ENCODE measurements at regions of chr11 and their contacts with region 1.

Region 1: GRCh38 chr11:104897891-104898684 is at the start of gene CASP12:
- DNase-seq: no peak
- H3K4me3 ChIP-seq: peak within 1 kb of the TSS; percentile 44 to 65
- H3K27ac ChIP-seq: peak within 1 kb of the TSS; percentile 83 to 85
- H3K4me1 ChIP-seq: peaks cover 0 to 3% of the 10 kb centered on the region in 2 donors
- H3K27me3 ChIP-seq: no peaks in the 10 kb centered on the region
- CTCF ChIP-seq: no peak
- total RNA-seq, gene CASP12: 5.6 TPM

Region 2: GRCh38 chr11:104728927-104729326 is 169.2 kb before region 1 on chr11:
- intact Hi-C with region 1: no loop called
- DNase-seq: no peak
- H3K4me3 ChIP-seq: no peak overlapping the region
- H3K27ac ChIP-seq: no peak overlapping the region
- H3K4me1 ChIP-seq: no peaks in the 10 kb centered on the region
- H3K27me3 ChIP-seq: no peaks in the 10 kb centered on the region
- CTCF ChIP-seq: no peak

Region 3: DNA sequence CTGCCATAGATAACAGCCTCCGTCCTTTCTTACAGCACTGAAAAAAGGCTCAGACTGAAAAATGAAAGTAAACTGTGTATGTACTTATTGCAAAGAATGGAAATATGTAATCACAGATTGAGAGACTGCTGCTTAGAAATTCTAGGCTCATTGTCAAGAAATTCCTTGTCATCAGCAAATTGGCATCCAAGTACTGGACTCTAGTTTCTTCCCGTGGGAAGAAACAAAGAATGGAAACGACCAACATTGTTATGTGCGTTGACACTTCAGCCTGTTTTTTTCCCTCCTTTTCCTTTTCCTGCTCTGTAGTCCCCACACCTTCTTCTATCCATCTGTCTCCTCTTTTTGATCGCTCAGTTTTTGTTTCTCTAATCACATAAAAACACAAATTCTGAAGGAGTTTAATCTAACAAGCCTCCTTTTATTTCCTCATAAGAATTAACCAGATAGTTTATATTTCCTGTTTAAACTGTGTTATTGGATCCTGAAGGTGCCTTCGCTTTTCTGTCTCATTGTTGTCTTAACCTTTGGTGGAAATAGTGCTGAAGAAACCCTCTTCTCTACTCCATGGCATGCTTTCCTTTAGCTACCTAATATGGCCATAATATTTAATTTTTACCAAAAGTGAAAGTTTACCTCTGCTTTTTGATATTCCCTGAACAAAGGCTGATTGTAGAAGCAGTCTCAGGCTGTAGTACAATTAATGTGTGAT is 20.2 kb after region 1 on chr11:
- intact Hi-C with region 1: loop called (anchors 2 kb)
- DNase-seq: no peak
- H3K4me3 ChIP-seq: peak overlapping the region; percentile 51 to 69
- H3K27ac ChIP-seq: peak overlapping the region; percentile 63 to 69
- H3K4me1 ChIP-seq: peaks cover 3 to 6% of the 10 kb centered on the region in 2 donors
- H3K27me3 ChIP-seq: no peaks in the 10 kb centered on the region
- CTCF ChIP-seq: no peak

Region 4: GRCh38 chr11:104968355-104968855 is 70.3 kb after region 1 on chr11 and contains the start of gene CASP4:
- intact Hi-C with region 1: loop called (anchors 5 kb)
- DNase-seq: no peak
- H3K4me3 ChIP-seq: peak within 1 kb of the TSS; percentile 71 to 74
- H3K27ac ChIP-seq: peak within 1 kb of the TSS; percentile 84 to 85
- H3K4me1 ChIP-seq: peaks cover 0 to 20% of the 10 kb centered on the region in 2 donors
- H3K27me3 ChIP-seq: no peaks in the 10 kb centered on the region
- CTCF ChIP-seq: no peak
- total RNA-seq, gene CASP4: 56.6 TPM

Region 5: DNA sequence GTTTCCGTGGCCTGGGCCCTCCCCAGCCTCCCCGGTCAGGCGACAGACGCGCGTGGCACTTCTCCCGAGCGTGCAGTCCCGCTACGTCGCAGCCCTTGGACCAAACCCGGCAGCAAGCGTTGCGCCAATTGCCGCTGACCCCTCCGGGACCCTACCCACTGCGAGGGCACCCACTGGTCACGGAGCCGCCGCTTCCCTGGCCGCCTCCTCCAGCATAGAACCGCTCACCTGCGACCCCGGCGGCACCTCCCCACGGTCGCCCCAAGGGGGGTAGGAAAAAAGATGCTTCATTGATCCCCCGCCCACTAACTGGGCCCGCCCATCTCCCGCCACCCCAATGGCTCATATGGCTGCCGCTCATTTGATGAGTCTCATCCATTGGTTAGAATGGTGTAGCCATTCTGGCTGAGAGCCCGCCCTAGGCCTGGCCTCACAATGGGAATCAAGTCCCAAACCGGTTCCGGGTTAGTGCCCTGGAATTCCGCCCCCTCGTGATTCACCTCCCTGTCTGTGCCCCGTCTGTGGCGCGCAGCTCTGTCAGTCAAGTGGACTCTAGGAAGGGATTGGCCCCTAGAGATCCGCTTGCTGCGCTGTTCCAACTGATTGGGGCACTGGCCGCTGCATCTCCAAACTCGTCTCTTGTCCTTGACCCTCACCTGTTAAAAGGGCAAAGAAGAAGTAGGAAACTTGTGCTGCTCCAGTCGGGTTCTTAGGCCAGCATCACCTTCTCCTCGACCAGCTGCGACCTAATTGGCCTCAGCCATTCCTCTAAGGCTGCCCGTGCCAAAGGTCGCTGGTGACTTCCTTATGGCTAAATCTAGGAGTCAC is 1124.1 kb after region 1 on chr11 and contains the start of gene MSANTD4:
- intact Hi-C with region 1: loop called (anchors 5 kb)
- DNase-seq: peak; percentile 99 to 100
- H3K4me3 ChIP-seq: peak within 1 kb of the TSS; percentile 68 to 96
- H3K27ac ChIP-seq: peak within 1 kb of the TSS; percentile 77 to 79
- H3K4me1 ChIP-seq: peaks cover 3 to 12% of the 10 kb centered on the region in 2 donors
- H3K27me3 ChIP-seq: no peaks in the 10 kb centered on the region
- CTCF ChIP-seq: peak in 1 of 3 experiments; percentile 20
- total RNA-seq, gene MSANTD4: 13.6 TPM

Measured in ascending aorta (tissue), 2 donors.